ENCODE measurements at regions of chr4 and their contacts with region 1.

Region 1: DNA sequence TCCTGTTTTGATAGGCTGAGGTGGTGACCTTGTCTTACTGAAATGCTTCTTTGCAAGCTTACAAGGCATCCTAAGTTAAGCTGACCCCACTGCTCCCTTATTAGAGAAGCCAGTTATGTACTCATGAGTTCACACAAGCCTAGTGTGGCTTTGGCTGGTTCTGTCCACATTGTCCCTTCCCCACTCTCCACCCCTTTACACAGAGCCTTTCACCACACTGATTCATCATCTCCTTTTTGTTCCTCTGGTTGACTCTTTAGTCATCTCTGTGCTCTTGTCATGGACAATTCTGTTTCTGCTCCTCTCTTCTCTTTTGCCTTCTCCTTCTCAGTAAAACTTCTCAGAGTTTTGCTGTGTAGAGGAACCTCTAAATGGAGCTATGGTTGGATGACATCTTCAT is 4.9 kb downstream of the CHRNA9 start:
- DNase-seq: no peak
- H3K4me3 Mint-ChIP-seq: no peak overlapping the region
- H3K27ac Mint-ChIP-seq: no peak overlapping the region
- H3K4me1 Mint-ChIP-seq: peaks cover 16% of the 10 kb centered on the region
- H3K27me3 Mint-ChIP-seq: peaks cover 14% of the 10 kb centered on the region

Region 2: DNA sequence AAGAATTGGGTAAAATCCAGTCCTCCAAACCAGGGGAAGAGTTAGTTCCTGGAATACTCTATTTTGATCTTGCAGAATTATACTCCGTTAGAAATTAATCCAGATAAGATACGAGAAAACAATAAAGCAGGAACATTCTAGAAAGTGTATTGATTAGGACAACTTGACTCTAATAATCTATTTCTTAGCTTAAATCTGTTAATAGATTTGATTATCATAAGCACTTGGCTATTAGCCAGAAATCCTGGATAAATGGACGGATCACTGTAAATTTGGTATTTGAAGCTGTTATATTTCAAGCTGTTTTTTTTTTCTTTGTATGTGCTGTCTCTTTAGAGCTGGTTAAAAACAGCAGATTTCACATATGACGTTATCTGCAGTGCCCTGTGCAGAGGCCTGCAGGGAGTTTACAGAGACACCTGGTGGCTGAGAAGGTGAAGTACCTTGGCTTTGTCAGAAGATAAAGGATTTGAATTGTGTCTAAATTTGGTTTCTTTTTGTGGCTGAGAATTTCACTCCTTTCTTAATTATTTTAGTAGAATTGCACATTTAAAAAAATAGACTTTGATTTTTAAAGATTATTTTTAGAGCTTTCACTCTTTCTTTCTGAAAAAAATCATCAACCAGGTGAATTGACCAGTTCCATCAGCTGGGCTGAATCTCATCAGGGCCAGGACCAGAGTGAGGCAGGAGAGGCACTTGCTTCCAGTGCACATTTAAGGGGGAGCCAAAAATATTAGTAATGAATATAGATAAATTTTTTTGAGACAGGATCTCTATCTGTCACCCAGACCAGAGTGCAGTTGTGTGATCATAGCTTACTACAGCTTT is 14.6 kb before region 1 on chr4:
- CTCF ChIA-PET with region 1: interaction called, 15 read pairs
- POLR2A ChIA-PET with region 1: no interaction called
- DNase-seq: peak; percentile 80
- H3K4me3 Mint-ChIP-seq: no peak overlapping the region
- H3K27ac Mint-ChIP-seq: peak overlapping the region; percentile 69
- H3K4me1 Mint-ChIP-seq: peaks cover 34% of the 10 kb centered on the region
- H3K27me3 Mint-ChIP-seq: no peaks in the 10 kb centered on the region

Region 3: GRCh38 chr4:40887288-40888131 is 547.5 kb after region 1 on chr4:
- CTCF ChIA-PET with region 1: no interaction called
- POLR2A ChIA-PET with region 1: no interaction called
- DNase-seq: no peak
- H3K4me3 Mint-ChIP-seq: no peak overlapping the region
- H3K27ac Mint-ChIP-seq: no peak overlapping the region
- H3K4me1 Mint-ChIP-seq: peaks cover 9% of the 10 kb centered on the region
- H3K27me3 Mint-ChIP-seq: peaks cover 11% of the 10 kb centered on the region